ENCODE measurements at regions of chr6 and their contacts with region 1.

Region 1: GRCh38 chr6:31541658-31542521 is at the start of gene DDX39B:
- DNase-seq: peak; percentile 86 to 98 (median 93)
- ATAC-seq: peak; percentile 74 to 77
- H3K4me3 Mint-ChIP-seq: peak within 1 kb of the TSS; percentile 96 to 99 (median 98)
- H3K27ac Mint-ChIP-seq: peak within 1 kb of the TSS; percentile 99 to 100 (median 99)
- H3K4me1 Mint-ChIP-seq: peaks cover 33 to 64% (median 52%) of the 10 kb centered on the region in 4 donors
- H3K27me3 Mint-ChIP-seq: no peaks in the 10 kb centered on the region
- polyA plus RNA-seq, gene DDX39B: 53.6 to 104 (median 96.0) TPM

Region 2: GRCh38 chr6:29762781-29763214 is 1779.1 kb before region 1 on chr6:
- POLR2A ChIA-PET with region 1: no interaction called
- DNase-seq: no peak
- ATAC-seq: no peak
- H3K4me3 Mint-ChIP-seq: no peak overlapping the region
- H3K27ac Mint-ChIP-seq: peak overlapping the region in 2 of 10 donors; percentile 44 to 58
- H3K4me1 Mint-ChIP-seq: peaks cover 0 to 10% (median 7%) of the 10 kb centered on the region in 4 donors
- H3K27me3 Mint-ChIP-seq: peaks cover 4 to 43% (median 11%) of the 10 kb centered on the region in 5 donors

Region 3: DNA sequence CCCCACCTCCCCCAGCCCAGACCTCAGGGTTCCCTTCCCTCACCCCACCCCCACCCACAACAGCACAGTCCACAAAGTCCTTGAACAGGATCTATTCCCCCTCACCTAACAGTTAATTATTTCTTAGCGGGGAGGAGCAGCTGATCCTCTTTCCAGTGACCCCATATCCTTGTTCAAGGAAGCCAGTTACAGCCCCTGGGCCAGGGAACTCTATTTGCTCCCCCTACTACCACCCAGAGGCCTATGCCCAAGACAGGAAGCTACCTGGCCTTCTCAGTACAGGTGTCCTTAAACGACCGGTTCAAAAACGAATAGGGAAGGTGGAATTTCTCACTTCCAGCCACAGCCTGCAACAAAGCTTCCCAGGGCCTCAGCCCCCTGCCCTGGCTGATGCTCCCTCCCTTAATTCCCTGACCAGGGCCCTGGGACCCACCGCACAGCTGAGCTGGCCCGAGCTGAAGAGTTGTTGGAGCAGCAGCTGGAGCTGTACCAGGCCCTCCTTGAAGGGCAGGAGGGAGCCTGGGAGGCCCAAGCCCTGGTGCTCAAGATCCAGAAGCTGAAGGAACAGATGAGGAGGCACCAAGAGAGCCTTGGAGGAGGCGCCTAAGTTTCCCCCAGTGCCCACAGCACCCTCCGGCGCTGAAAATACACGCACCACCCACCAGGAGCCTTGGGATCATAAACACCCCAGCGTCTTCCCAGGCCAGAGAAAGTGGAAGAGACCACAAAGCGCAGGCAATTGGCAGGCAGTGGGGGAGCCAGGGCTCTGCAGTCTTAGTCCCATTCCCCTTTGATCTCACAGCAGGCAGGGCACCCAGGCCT is 12.3 kb before region 1 on chr6:
- POLR2A ChIA-PET with region 1: interaction called, 13 read pairs
- DNase-seq: no peak
- ATAC-seq: peak; percentile 18 to 33
- H3K4me3 Mint-ChIP-seq: peak overlapping the region in 1 of 10 donors; percentile 14
- H3K27ac Mint-ChIP-seq: peak overlapping the region in 3 of 10 donors; percentile 18 to 41 (median 37)
- H3K4me1 Mint-ChIP-seq: peaks cover 2 to 31% (median 13%) of the 10 kb centered on the region in 4 donors
- H3K27me3 Mint-ChIP-seq: no peaks in the 10 kb centered on the region

Region 4: GRCh38 chr6:31569861-31570536 is 28.1 kb after region 1 on chr6:
- POLR2A ChIA-PET with region 1: interaction called, 68 read pairs
- DNase-seq: peak in 1 of 10 donors; percentile 28
- ATAC-seq: no peak
- H3K4me3 Mint-ChIP-seq: peak overlapping the region in 7 of 10 donors; percentile 7 to 47 (median 39)
- H3K27ac Mint-ChIP-seq: peak overlapping the region; percentile 70 to 98 (median 82)
- H3K4me1 Mint-ChIP-seq: peaks cover 46 to 88% (median 81%) of the 10 kb centered on the region in 4 donors
- H3K27me3 Mint-ChIP-seq: no peaks in the 10 kb centered on the region

Region 5: GRCh38 chr6:31580807-31581433 is 39.0 kb after region 1 on chr6:
- POLR2A ChIA-PET with region 1: interaction called, 68 read pairs
- DNase-seq: peak; percentile 77 to 95 (median 90)
- ATAC-seq: peak; percentile 79
- H3K4me3 Mint-ChIP-seq: peak overlapping the region; percentile 97 to 100 (median 99)
- H3K27ac Mint-ChIP-seq: peak overlapping the region; percentile 92 to 100 (median 98)
- H3K4me1 Mint-ChIP-seq: peaks cover 32 to 87% (median 73%) of the 10 kb centered on the region in 4 donors
- H3K27me3 Mint-ChIP-seq: no peaks in the 10 kb centered on the region

Region 6: DNA sequence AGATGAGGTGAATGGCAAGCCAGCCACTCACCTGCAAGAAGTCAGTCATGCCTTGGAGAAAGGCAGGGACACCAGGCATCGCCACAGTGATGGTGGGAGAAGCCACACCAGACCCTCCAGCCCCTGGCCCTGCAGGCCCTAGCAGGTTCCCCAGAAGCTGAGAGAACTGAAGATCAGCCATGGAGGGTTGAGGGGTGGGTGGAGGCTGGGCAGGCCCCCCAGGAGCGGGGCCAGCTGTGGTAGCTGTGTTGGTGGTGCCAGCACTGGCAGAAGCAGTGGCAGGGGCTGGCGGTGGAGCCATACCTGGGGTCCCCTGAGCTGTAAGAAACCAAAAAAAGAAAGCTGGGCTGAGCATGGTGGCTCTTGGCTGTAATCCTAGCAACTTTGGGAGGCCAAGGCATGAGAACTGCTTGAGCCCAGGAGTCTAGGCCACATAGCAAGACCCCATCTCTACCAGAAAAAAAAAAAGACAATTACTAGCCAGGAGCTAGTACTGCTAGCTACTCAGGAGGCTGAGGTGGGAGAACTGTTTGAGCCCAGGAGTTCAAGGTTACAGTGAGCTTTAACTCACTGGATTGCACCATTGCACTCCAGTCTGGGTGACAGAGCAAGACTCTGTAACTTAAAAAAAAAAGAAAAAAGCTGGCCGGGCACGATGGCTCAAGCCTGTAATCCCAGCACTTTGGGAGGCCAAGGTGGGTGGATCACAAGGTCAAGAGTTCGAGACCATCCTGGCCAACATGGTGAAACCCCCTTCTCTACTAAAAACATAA is 101.1 kb after region 1 on chr6:
- POLR2A ChIA-PET with region 1: no interaction called
- DNase-seq: no peak
- ATAC-seq: no peak
- H3K4me3 Mint-ChIP-seq: no peak overlapping the region
- H3K27ac Mint-ChIP-seq: peak overlapping the region in 3 of 10 donors; percentile 36 to 51 (median 46)
- H3K4me1 Mint-ChIP-seq: peaks cover 0 to 12% (median 8%) of the 10 kb centered on the region in 4 donors
- H3K27me3 Mint-ChIP-seq: no peaks in the 10 kb centered on the region

Region 7: DNA sequence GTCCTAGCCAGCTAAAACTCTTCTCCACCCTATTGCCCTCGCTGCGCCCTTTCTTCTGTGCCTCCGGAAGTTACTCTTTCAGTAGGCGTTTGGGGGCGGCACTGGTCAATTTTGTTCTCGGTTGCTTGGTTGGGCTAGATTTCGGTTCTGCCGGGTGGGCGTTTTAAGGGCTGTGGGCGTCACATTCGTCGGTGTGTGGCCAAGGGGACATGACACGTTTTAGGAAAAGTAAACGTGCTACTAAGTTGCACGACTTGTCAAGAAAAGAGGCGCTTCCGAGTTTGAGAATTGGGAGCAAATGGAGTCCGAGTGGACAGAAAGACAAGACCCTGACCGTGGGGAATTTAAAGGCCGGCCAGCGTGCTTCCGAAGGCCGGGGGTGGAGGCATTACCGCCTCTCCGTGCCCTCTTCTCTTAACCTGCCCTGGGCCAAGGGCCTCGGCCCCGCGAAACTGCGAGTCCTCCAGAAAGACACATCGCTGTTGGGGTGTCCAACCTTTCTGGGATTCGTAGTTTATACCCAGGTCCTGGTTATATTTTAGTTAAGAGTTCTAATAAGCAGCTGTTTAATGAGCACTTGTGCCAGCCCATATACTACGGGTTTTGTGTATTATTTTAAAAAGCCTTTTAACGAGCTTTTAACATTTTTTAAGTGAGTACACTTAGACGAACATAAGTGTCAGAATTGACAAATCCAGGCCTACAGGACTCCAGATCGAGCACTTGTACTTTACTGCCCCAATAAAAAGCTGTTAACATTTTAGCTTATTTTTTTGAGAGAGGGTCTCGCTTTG is 111.2 kb after region 1 on chr6:
- POLR2A ChIA-PET with region 1: interaction called, 15 read pairs
- DNase-seq: peak in 5 of 10 donors; percentile 65 to 94 (median 87)
- ATAC-seq: peak; percentile 74 to 75
- H3K4me3 Mint-ChIP-seq: peak overlapping the region; percentile 88 to 99 (median 95)
- H3K27ac Mint-ChIP-seq: peak overlapping the region; percentile 97 to 100 (median 100)
- H3K4me1 Mint-ChIP-seq: peaks cover 25 to 70% (median 67%) of the 10 kb centered on the region in 4 donors
- H3K27me3 Mint-ChIP-seq: peaks cover 0 to 2% (median 0%) of the 10 kb centered on the region in 5 donors

Region 8: GRCh38 chr6:31829633-31830283 is 287.9 kb after region 1 on chr6:
- POLR2A ChIA-PET with region 1: no interaction called
- DNase-seq: peak in 3 of 10 donors; percentile 54 to 63 (median 58)
- ATAC-seq: peak; percentile 6 to 17
- H3K4me3 Mint-ChIP-seq: peak overlapping the region; percentile 73 to 94 (median 90)
- H3K27ac Mint-ChIP-seq: peak overlapping the region; percentile 26 to 91 (median 81)
- H3K4me1 Mint-ChIP-seq: peaks cover 7 to 48% (median 31%) of the 10 kb centered on the region in 4 donors
- H3K27me3 Mint-ChIP-seq: no peaks in the 10 kb centered on the region